ENCODE measurements at regions of chrX and their contacts with region 1.

Region 1: GRCh38 chrX:104195489-104196084 is 29.3 kb downstream of the FAM199X start:
- DNase-seq: no peak
- H3K4me3 Mint-ChIP-seq: no peak overlapping the region
- H3K27ac Mint-ChIP-seq: no peak overlapping the region
- H3K4me1 Mint-ChIP-seq: no peaks in the 10 kb centered on the region
- H3K27me3 Mint-ChIP-seq: no peaks in the 10 kb centered on the region

Region 2: DNA sequence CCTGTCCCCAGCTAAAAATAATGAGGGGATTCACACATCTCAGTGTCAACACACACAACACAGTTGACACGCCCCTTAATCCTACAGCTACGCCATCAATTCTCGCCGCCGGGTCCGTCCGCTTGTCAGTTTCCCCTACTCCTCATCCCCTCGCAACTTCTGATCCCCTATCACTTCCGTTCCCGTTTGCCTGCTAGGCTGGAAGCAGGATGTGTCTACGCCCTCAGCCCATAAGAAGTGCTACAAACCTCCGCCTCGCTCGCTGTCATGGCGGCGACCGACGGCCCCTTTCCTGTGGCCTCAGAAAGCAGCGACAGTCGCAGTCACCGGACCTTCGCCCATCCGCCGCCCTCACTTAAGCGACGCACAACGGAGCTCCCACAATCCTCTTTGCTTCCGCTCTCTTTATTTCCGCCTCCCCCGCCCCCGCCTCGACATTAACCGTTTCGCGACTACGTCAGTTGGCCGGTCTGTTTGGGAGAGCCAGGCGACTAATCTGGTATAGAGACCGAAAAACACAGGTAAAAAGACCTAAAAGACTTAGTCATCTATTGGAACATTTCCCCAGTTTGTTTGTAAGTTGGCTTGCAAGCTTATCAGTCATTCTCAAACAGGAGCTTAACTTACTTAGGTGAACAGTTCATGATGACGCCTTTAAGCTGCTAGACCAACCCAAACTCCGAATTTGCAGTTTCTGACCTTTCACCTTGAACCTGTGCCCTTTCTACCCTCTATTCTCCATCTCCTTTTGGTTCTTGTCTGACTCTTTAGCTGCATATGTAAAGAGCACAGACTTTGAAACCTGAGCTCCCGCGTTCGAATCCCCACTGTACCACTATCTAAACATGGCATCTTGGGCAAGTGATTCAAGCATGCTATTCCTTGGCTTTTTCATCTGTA is 38.7 kb before region 1 on chrX and contains the start of gene SLC25A53:
- intact Hi-C with region 1: no loop called
- DNase-seq: peak; percentile 70
- H3K4me3 Mint-ChIP-seq: peak within 1 kb of the TSS; percentile 98
- H3K27ac Mint-ChIP-seq: peak within 1 kb of the TSS; percentile 100
- H3K4me1 Mint-ChIP-seq: peaks cover 21% of the 10 kb centered on the region
- H3K27me3 Mint-ChIP-seq: no peaks in the 10 kb centered on the region
- total RNA-seq, gene SLC25A53: 4.3 and 4.4 TPM in 2 replicates

Region 3: DNA sequence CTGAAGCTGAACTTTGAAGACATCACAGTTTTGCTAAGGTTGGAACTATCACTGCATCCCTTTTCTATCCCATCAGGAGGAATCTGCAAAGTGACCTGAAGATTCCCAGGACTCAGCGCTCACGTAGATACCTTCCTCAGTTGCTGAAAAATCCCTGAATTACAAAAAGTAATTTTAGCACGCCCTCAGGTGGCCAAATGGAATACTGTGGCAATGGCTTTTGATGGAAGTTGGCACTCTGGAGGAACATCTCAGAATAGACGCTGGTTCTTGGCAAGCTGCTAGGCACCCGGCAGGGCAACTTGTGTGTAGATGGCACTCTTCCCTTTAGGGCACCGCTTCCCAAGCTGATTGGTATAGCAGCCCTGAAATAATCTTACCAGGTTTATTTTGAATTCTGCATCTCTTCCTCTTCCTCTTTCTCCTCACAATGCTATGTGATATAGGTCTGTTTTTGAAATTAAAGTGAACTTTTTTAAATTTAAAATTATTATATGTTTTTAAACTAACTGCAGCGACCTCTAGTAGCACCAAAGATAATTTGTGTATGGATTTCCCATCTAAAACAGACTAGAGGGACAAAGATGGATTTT is 75.4 kb after region 1 on chrX:
- intact Hi-C with region 1: loop called (anchors 1 kb)
- DNase-seq: no peak
- H3K4me3 Mint-ChIP-seq: peak overlapping the region; percentile 26
- H3K27ac Mint-ChIP-seq: no peak overlapping the region
- H3K4me1 Mint-ChIP-seq: no peaks in the 10 kb centered on the region
- H3K27me3 Mint-ChIP-seq: peaks cover 2% of the 10 kb centered on the region

Region 4: DNA sequence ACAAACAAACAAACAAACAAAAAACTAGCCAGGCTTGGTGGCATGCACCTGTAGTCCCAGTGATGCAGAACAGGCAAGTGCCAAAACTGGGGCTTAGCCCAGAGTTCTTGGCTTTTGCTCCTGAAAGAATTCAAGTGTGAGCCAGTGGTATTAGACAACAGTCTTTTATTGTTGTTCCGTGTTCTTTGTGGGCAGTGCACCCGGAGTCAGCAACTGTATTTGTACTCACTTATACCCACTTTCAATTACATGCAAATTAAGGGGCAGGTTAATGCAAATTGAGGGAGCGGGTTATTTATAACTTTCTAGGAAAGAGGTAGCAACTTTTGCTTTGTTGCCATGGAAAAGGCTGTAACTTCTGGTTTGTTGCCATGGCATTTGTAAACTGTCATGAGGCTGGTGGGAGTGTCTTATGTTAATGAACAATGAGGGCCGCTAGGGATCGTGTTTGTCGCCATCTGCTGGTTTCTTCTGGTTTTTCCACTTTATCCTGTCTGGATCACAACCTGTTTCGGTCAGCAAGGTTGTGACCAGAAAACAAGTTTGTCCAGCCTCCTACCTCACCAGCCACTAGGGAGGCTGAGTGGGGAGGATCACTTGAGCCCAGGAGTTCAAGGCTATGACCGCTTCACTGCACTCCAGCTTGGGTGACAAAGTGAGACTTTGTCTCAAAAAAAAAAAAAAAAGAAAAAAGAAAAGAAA is 148.0 kb after region 1 on chrX:
- intact Hi-C with region 1: loop called (anchors 2 kb)
- DNase-seq: peak; percentile 2
- H3K4me3 Mint-ChIP-seq: no peak overlapping the region
- H3K27ac Mint-ChIP-seq: no peak overlapping the region
- H3K4me1 Mint-ChIP-seq: no peaks in the 10 kb centered on the region
- H3K27me3 Mint-ChIP-seq: peaks cover 6% of the 10 kb centered on the region